Activated CD4-positive, alpha-beta memory T cell treated with anti-CD3 and anti-CD28 coated beads for 36 hours (primary cell): ENCODE measurements at regions of chr6 and their contacts with region 1.

Region 1: DNA sequence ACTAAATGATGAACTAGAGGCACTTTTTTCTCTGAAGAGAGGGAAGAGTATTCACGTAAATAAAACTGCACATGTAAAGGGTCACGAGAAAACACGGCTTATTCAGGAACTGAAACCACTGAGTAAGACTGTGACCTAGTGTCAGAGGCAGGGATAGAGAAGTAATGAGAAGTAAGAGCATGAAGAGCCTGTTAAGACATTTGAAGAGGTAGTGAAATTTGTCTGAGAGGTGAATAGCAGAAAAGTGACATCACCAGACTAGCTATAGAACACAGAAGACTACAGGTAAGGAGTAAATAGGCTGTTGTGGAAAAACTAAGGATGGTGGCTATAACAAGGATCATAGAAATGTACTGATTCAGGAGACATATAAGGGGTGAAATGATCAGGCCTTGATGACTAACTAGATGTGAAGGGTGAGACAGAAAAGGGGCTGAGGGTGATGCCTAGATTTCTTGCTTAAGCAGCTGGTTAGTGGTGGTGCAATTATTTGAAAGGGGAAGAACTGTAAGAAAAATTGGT is 76.8 kb downstream of the REV3L start:
- DNase-seq: no peak
- H3K4me3 Mint-ChIP-seq: no peak overlapping the region
- H3K27ac Mint-ChIP-seq: peak overlapping the region; percentile 25
- H3K4me1 Mint-ChIP-seq: peaks cover 13% of the 10 kb centered on the region
- H3K27me3 Mint-ChIP-seq: no peaks in the 10 kb centered on the region

Region 2: GRCh38 chr6:111338843-111339242 is 67.4 kb before region 1 on chr6:
- CTCF ChIA-PET with region 1: no interaction called
- POLR2A ChIA-PET with region 1: no interaction called
- intact Hi-C with region 1: loop called (anchors 2 kb)
- DNase-seq: peak; percentile 11
- H3K4me3 Mint-ChIP-seq: no peak overlapping the region
- H3K27ac Mint-ChIP-seq: peak overlapping the region; percentile 5
- H3K4me1 Mint-ChIP-seq: peaks cover 20% of the 10 kb centered on the region
- H3K27me3 Mint-ChIP-seq: no peaks in the 10 kb centered on the region

Region 3: GRCh38 chr6:111423960-111424846 is 17.9 kb after region 1 on chr6:
- CTCF ChIA-PET with region 1: no interaction called
- POLR2A ChIA-PET with region 1: no interaction called
- intact Hi-C with region 1: no loop called
- DNase-seq: no peak
- H3K4me3 Mint-ChIP-seq: no peak overlapping the region
- H3K27ac Mint-ChIP-seq: no peak overlapping the region
- H3K4me1 Mint-ChIP-seq: peaks cover 40% of the 10 kb centered on the region
- H3K27me3 Mint-ChIP-seq: no peaks in the 10 kb centered on the region